Right cardiac atrium (tissue), 5 donors: ENCODE measurements at regions of chr20 and their contacts with region 1.

Region 1: DNA sequence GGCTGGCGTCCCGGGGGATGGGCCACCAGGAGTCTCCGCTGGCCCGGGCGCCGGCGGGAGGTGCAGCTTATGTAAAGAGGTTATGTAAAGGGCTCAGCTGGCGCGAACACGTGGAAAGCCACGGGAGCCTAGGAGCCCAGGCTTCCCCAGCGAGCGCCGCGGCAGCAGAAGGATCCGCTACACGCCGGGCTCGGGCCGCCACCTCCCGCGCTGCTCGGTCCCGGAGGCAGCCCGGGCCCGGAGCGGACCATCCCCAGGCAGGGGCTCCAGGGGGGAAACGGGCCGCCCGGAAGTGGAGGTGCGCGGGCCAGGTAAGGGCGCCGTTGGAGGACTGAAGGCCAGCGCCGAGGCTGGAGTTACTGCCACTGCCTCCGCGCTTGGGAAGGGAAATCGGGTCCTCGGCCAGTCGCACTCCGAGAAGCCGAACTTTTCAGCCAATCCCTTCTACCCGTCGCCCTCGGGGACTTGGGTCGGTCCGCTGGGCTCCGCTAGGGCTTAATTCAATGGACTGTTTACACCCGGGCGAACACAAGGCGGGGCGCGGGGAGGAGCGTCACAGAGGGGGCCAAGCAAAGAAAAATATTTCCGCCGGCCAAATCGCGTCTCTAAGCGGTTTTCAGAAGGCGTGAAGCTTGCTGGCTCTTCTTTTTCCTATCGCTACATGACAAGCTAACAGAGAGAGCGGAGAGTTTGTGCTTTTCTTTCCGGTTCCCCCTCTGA is 398 bp downstream of the STK35 start:
- DNase-seq: peak; percentile 94 to 97 (median 97)
- ATAC-seq: peak; percentile 95 to 97
- H3K4me3 ChIP-seq: peak overlapping the region; percentile 69
- H3K27ac ChIP-seq: peak overlapping the region; percentile 97
- H3K4me1 ChIP-seq: peaks cover 2% of the 10 kb centered on the region
- H3K27me3 ChIP-seq: no peaks in the 10 kb centered on the region

Region 2: DNA sequence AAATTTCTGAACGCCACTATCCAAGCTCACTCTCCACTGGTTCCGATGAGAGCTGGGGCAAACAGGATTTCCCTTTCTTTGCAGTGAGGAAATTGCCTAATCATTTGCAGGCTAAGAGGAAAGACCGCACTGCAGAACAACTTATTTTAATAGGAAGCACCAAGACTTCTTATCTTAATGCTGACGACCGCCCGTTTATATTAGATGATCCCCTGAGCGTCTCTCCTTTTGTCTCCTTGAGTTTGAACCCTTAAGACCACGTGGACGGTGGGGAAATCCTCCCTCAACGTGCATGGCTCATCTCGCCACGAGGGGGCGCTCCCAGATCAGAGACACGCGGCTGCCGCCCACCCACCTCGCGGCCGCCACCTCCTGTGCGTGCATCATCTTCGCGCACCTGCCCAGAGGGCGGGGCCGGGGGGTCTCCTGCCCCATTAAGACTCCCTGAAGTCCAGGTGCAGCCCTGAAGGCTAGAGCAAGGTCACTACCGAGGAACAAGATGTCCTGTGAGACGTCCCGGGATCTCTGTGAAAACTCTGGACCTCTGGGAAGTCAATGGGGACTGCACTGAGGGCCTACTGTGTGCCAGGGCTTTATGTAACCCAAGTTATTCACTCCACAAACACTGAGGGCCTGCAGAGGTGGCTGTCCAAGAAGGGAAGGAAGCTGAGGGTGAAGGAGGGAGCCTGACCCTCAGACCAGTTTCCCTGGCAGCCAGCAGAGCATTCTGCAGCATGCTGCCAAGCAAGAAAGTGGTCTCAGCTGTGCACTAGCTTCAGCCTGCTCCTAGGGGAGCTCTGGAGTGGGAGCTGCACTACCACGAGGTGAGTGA is 136.3 kb before region 1 on chr20:
- intact Hi-C with region 1: loop called in 1 of 4 experiments (anchors 10 kb)
- DNase-seq: peak; percentile 75 to 93 (median 88)
- ATAC-seq: peak; percentile 78 to 88
- H3K4me3 ChIP-seq: no peak overlapping the region
- H3K27ac ChIP-seq: no peak overlapping the region
- H3K4me1 ChIP-seq: no peaks in the 10 kb centered on the region
- H3K27me3 ChIP-seq: no peaks in the 10 kb centered on the region

Region 3: DNA sequence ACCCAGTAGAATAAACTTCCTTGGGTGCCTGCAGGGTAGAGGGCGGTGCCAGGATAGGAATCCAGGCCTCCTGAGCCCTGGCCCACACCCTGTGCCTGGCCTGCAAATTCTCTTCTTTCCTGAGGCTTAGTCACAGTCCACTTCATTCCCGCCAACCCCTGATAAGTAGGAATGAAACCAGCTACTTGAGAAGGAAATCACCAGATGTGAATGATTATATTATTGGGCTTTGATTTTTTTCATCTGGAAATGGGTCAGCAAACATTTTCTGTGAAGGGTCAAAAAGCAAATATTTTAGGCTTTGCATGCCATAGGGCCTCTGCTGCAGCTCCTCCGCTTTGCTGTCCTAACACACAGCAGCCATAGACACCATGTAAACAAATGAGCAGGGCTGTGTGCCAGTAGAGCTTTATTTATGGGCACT is 49.8 kb after region 1 on chr20:
- intact Hi-C with region 1: loop called in 1 of 4 experiments (anchors 5 kb)
- DNase-seq: peak in 2 of 3 donors; percentile 43 to 75
- ATAC-seq: peak; percentile 65 to 88
- H3K4me3 ChIP-seq: no peak overlapping the region
- H3K27ac ChIP-seq: peak overlapping the region; percentile 80
- H3K4me1 ChIP-seq: peaks cover 3% of the 10 kb centered on the region
- H3K27me3 ChIP-seq: no peaks in the 10 kb centered on the region